B cell (primary cell): ENCODE measurements at regions of chr15 and their contacts with region 1.

Region 1: GRCh38 chr15:52498706-52499105 is 30.0 kb downstream of the MYO5A start:
- DNase-seq: no peak
- ATAC-seq: no peak
- H3K4me3 ChIP-seq: no peak overlapping the region
- H3K4me3 Mint-ChIP-seq: no peak overlapping the region
- H3K27ac ChIP-seq: no peak overlapping the region
- H3K27ac Mint-ChIP-seq: no peak overlapping the region
- H3K4me1 ChIP-seq: peaks cover 13 to 14% of the 10 kb centered on the region in 2 donors
- H3K4me1 Mint-ChIP-seq: peaks cover 38% of the 10 kb centered on the region
- H3K27me3 ChIP-seq: no peaks in the 10 kb centered on the region
- H3K27me3 Mint-ChIP-seq: no peaks in the 10 kb centered on the region
- CTCF ChIP-seq: no peak

Region 2: GRCh38 chr15:52288051-52288942 is 210.4 kb before region 1 on chr15:
- CTCF ChIA-PET with region 1: no interaction called
- POLR2A ChIA-PET with region 1: no interaction called
- intact Hi-C with region 1: no loop called
- DNase-seq: no peak
- ATAC-seq: no peak
- H3K4me3 ChIP-seq: no peak overlapping the region
- H3K4me3 Mint-ChIP-seq: no peak overlapping the region
- H3K27ac ChIP-seq: no peak overlapping the region
- H3K27ac Mint-ChIP-seq: no peak overlapping the region
- H3K4me1 ChIP-seq: peaks cover 0 to 17% of the 10 kb centered on the region in 2 donors
- H3K4me1 Mint-ChIP-seq: peaks cover 20% of the 10 kb centered on the region
- H3K27me3 ChIP-seq: peaks cover 0 to 7% (median 0%) of the 10 kb centered on the region in 4 experiments
- H3K27me3 Mint-ChIP-seq: no peaks in the 10 kb centered on the region
- CTCF ChIP-seq: no peak

Region 3: GRCh38 chr15:52481915-52482314 is 16.8 kb before region 1 on chr15:
- CTCF ChIA-PET with region 1: interaction called, 4 read pairs
- POLR2A ChIA-PET with region 1: no interaction called
- intact Hi-C with region 1: loop called (anchors 2 kb)
- DNase-seq: peak; percentile 80
- ATAC-seq: peak; percentile 99
- H3K4me3 ChIP-seq: peak overlapping the region in 2 of 5 experiments; percentile 1 to 24
- H3K4me3 Mint-ChIP-seq: peak overlapping the region; percentile 1
- H3K27ac ChIP-seq: peak overlapping the region; percentile 39 to 63
- H3K27ac Mint-ChIP-seq: peak overlapping the region; percentile 18
- H3K4me1 ChIP-seq: peaks cover 37 to 42% of the 10 kb centered on the region in 2 donors
- H3K4me1 Mint-ChIP-seq: peaks cover 50% of the 10 kb centered on the region
- H3K27me3 ChIP-seq: no peaks in the 10 kb centered on the region
- H3K27me3 Mint-ChIP-seq: no peaks in the 10 kb centered on the region
- CTCF ChIP-seq: no peak